ENCODE measurements at regions of chr16 and their contacts with region 1.

Region 1: GRCh38 chr16:22623351-22623781 is 112.7 kb downstream of the NPIPB5 start:
- DNase-seq: no peak
- ATAC-seq: no peak
- H3K4me3 ChIP-seq: no peak overlapping the region
- H3K27ac ChIP-seq: no peak overlapping the region
- H3K4me1 ChIP-seq: no peaks in the 10 kb centered on the region
- H3K27me3 ChIP-seq: peaks cover 0 to 38% (median 6%) of the 10 kb centered on the region in 9 donors
- CTCF ChIP-seq: no peak
- POLR2A ChIP-seq: no peak

Region 2: DNA sequence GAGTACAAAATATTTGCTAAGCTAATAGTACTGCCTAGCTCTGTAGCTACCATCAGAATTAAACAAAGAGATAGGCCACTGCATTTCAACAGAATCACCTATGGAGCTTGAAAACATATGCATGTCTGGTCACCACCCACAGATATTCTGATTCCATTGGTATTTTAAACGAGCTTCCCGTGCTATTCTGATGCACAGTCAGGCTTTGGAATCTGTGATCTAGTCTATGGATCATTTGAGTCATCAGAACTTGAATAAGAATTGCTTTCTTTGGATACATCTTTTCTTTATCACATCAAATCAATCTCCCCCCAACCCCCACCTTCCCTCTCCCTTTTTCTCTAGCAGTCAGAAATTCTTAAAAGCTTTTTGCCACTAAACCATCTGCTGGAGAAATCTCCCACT is 12.0 kb after region 1 on chr16:
- intact Hi-C with region 1: no loop called
- DNase-seq: no peak
- ATAC-seq: no peak
- H3K4me3 ChIP-seq: no peak overlapping the region
- H3K27ac ChIP-seq: no peak overlapping the region
- H3K4me1 ChIP-seq: no peaks in the 10 kb centered on the region
- H3K27me3 ChIP-seq: peaks cover 0 to 58% (median 17%) of the 10 kb centered on the region in 9 donors
- CTCF ChIP-seq: no peak
- POLR2A ChIP-seq: no peak

Region 3: GRCh38 chr16:22646948-22647556 is 23.7 kb after region 1 on chr16:
- intact Hi-C with region 1: loop called in 1 of 10 experiments (anchors 2 kb)
- DNase-seq: no peak
- ATAC-seq: no peak
- H3K4me3 ChIP-seq: no peak overlapping the region
- H3K27ac ChIP-seq: no peak overlapping the region
- H3K4me1 ChIP-seq: no peaks in the 10 kb centered on the region
- H3K27me3 ChIP-seq: peaks cover 0 to 70% (median 7%) of the 10 kb centered on the region in 9 donors
- CTCF ChIP-seq: no peak
- POLR2A ChIP-seq: no peak

Region 4: DNA sequence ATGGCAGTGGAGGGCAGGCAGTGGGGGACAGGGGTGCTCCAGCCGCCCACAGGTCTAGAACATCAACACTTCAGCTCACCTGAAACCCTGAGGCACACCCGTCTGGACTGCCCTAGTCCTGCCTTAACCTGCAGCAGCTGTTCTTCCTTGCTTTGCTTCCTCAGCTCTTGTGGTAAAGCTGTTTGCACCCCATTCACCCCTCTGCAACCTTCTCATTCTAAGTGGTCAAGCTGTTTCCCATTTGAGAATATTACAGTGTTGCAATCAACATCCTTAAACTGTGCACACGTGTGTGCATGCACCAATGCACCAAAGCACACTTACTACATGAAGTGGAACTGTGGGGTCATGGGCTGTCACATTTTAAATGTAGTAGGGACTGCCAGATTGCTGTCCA is 711.1 kb after region 1 on chr16:
- intact Hi-C with region 1: no loop called
- DNase-seq: no peak
- ATAC-seq: no peak
- H3K4me3 ChIP-seq: no peak overlapping the region
- H3K27ac ChIP-seq: no peak overlapping the region
- H3K4me1 ChIP-seq: no peaks in the 10 kb centered on the region
- H3K27me3 ChIP-seq: peaks cover 0 to 8% (median 0%) of the 10 kb centered on the region in 9 donors
- CTCF ChIP-seq: no peak
- POLR2A ChIP-seq: no peak

Measured in heart left ventricle (tissue), 16 donors.